Right lobe of liver (tissue), 6 donors: ENCODE measurements at regions of chr17 and their contacts with region 1.

Region 1: DNA sequence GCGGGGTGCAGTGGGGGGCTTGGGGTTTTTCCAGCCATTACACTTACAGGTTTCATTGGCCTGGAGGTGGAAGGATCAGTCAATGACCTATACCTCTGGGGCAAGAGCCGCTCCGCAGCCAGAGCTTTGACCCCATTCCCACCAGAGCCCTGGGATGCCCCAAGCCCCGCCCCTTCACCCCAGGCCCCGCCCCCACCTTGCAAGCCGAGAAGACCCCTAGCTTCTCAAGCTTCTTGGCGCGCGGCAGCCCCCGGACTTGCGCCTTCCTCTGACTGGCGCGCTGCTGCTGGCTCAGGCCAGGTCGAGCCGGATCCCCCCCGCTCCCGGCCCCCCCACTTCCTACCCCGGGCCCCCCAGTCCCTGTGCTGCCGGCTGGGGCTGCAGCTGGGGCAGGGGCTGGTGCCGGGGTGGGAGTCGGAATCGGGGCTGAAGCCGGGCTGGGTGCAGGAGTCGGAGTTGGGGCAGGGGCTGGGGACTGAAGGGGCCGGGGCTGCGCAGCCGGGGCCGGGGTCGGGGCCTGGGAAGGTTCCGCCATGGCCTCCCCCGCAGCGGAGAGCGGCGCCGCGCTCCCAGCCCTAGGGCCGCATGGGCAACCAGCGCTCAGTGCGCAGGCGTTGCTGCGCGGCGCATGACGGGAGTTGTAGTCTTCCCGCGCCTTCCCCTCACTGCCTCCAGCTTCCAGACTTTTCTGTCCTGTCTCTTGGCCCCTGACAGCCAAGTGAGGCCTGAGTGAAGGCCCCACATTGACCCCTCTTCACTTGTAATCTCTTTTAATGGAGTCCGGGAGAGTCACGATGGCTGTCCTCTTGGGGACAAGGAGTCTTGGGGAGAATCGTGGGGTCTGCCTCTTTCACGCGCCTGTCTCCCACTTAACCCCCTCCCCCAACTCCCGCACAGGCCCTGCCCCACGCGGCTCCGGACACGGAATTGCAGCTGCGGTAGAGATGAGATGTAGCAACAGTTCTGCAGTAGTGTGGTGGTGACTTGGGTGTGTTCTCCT is at the start of gene KAT2A:
- DNase-seq: peak; percentile 85 to 89 (median 88)
- ATAC-seq: peak; percentile 73 to 80 (median 80)
- H3K4me3 ChIP-seq: peak within 1 kb of the TSS; percentile 70 to 74 (median 71)
- H3K27ac ChIP-seq: peak within 1 kb of the TSS; percentile 50 to 79 (median 66)
- H3K4me1 ChIP-seq: peaks cover 0 to 29% (median 4%) of the 10 kb centered on the region in 4 donors
- H3K27me3 ChIP-seq: no peaks in the 10 kb centered on the region
- CTCF ChIP-seq: no peak
- POLR2A ChIP-seq: peak; percentile 28
- total RNA-seq, gene KAT2A: 14.3 to 36.4 (median 21.3) TPM

Region 2: DNA sequence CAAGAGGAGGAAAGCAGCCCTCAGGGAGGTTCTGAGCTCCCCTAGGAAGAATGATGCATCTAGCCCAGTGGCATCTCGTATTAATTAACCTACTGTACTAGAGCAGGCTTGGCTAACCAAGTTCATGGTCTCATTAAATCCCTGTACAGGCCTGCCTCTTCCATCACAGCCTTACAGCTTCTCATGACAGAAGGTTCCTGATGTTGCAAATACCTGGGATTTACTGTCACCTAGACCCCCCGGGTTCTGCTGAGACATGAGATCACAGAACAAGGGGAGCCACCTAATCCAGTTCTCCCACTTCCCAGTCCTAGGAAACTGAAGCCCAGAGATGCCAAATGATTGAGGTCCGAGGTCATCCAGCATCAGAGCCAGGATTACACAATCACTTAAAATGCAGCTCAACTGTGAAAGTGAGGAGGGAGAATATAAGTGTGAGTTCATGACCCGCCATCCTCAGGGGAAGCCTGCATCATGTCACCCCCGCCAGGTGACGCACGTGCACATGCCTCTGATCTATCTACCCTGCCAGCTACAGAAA is 226.2 kb before region 1 on chr17:
- intact Hi-C with region 1: no loop called
- DNase-seq: peak; percentile 60 to 76 (median 64)
- ATAC-seq: peak; percentile 72 to 85 (median 78)
- H3K4me3 ChIP-seq: no peak overlapping the region
- H3K27ac ChIP-seq: peak overlapping the region in 2 of 3 donors; percentile 24 to 87
- H3K4me1 ChIP-seq: peaks cover 0 to 17% (median 10%) of the 10 kb centered on the region in 4 donors
- H3K27me3 ChIP-seq: no peaks in the 10 kb centered on the region
- CTCF ChIP-seq: peak in 2 of 4 donors; percentile 24 to 36
- POLR2A ChIP-seq: no peak

Region 3: GRCh38 chr17:41918314-41919164 is 202.5 kb before region 1 on chr17 and contains the start of gene ACLY:
- intact Hi-C with region 1: no loop called
- DNase-seq: peak; percentile 98
- ATAC-seq: peak; percentile 87 to 95 (median 90)
- H3K4me3 ChIP-seq: peak within 1 kb of the TSS; percentile 84 to 98 (median 94)
- H3K27ac ChIP-seq: peak within 1 kb of the TSS; percentile 68 to 87 (median 86)
- H3K4me1 ChIP-seq: peaks cover 0 to 37% (median 16%) of the 10 kb centered on the region in 4 donors
- H3K27me3 ChIP-seq: no peaks in the 10 kb centered on the region
- CTCF ChIP-seq: no peak
- POLR2A ChIP-seq: peak; percentile 90
- total RNA-seq, gene ACLY: 16.6 to 95.9 (median 33.6) TPM

Region 4: DNA sequence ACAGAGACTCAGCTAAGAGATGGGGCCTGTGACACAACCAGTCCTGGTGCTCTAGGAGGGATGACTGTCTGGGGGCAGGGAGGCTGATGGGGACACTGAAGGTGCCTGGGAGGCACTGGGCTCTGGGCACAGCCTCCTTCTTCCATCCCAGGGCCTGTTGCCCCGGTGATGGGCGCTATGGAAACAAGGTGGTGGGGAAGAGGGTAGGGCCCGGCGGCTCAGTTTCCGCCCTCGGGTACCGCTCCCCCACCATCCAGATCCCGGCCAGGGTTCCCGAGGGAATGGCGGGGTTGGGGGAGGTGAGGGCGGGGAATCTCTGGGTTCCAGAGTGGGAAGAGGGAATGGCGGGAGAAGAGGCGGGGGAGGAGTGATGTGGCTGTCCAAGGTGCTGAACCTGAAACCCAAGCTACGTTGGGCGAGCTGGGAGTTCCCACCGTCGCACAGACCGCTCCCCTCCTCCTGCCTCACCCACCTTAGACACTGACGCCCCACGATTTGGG is 58.9 kb after region 1 on chr17:
- intact Hi-C with region 1: loop called in 1 of 2 experiments (anchors 10 kb)
- DNase-seq: no peak
- ATAC-seq: peak in 3 of 4 donors; percentile 3 to 13 (median 7)
- H3K4me3 ChIP-seq: no peak overlapping the region
- H3K27ac ChIP-seq: no peak overlapping the region
- H3K4me1 ChIP-seq: peaks cover 0 to 16% (median 0%) of the 10 kb centered on the region in 4 donors
- H3K27me3 ChIP-seq: peaks cover 0 to 7% of the 10 kb centered on the region in 2 donors
- CTCF ChIP-seq: no peak
- POLR2A ChIP-seq: no peak